ENCODE measurements at regions of chr1 and their contacts with region 1.

Region 1: DNA sequence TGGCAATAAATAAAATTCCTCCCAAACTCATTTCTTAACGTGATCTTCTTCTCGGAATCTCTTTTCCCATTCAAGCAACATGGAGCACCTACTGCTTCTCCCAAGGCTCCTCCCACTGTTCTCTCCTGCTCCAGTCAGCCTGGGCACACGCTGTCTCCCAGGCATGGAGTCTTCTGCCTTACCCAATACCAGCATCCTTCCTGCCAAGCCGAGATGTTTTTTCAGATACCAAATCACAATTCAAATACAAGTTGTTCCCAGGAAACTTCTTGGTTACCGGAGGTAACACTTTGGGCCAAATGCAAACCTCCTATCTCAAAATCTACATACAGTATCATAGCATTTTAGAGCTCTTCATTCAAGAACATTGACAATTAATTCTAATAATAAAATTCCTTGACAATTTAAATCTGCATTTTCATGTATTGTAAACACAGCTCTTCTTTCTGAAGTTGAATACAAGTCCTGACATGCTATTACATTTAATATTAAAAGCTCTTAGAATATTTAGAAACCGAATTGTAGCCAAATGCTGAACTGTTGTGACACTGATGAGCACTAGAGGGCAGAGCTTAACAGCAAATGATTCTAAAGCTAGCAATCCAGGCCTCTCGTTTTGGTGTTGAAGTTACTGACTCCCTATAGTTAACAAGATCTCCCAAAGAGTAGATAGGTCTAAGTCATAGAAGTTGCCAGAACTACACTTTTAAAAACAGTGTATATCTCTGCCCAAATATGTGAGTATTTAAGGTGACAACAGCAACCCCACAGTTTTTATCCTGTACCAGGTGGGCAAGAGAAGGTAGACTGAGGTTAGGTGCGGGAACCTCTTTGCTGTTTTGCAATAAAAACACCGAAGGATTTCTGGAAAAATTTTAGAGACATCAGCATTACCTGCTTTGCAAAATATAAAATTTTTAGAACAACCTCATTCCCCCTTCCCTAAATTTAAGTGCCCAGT is 52.3 kb downstream of the BCAR3 start:
- DNase-seq: peak; percentile 82
- H3K4me3 ChIP-seq: no peak overlapping the region
- H3K27ac ChIP-seq: peak overlapping the region; percentile 19
- H3K4me1 ChIP-seq: peaks cover 47% of the 10 kb centered on the region
- H3K27me3 ChIP-seq: no peaks in the 10 kb centered on the region
- CTCF ChIP-seq: peak; percentile 58 to 64
- POLR2A ChIP-seq: no peak

Region 2: GRCh38 chr1:93078986-93079654 is 550.3 kb before region 1 on chr1 and contains the start of gene MTF2:
- CTCF ChIA-PET with region 1: interaction called, 3 read pairs
- POLR2A ChIA-PET with region 1: no interaction called
- dilution Hi-C with region 1: no loop called
- intact Hi-C with region 1: loop called (anchors 5 kb)
- DNase-seq: peak; percentile 97
- H3K4me3 ChIP-seq: peak within 1 kb of the TSS; percentile 81 to 90 (median 89)
- H3K27ac ChIP-seq: peak within 1 kb of the TSS; percentile 87
- H3K4me1 ChIP-seq: peaks cover 23% of the 10 kb centered on the region
- H3K27me3 ChIP-seq: no peaks in the 10 kb centered on the region
- CTCF ChIP-seq: no peak
- POLR2A ChIP-seq: peak; percentile 98
- total RNA-seq, gene MTF2: 40.5 and 42.6 TPM in 2 replicates

Region 3: DNA sequence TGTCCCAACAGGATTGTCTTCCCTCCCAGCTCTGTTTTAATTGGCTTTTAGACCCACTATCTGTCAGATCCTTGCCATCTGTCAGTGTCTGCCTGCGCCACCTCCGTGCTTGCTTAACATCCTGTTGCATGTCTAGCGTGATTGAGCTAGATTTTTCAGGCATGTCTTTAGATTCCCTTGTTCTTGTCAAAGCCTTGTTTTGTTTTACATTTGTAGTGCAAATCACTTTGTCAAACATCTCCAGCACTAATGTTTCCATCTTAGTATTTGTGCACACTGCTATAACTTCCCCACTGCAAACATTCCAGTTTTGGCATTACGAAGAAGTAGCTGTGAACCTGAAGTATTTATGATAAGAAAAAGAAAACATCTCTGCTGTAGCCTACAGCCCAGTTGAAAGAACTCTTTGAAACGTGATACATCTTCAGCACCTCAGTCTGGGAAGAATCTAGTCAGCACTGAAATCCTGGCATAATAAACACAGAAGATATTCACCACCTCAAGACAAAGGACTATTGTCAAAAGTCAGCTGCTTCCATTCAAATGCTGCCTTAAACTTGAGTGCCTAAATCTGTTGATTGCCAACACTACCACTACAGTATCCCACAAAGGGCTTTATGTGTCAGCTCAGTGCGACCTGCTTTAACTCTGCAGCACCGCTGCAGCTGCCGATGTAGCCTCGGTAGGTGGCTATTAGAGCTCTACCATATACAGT is 76.5 kb before region 1 on chr1:
- CTCF ChIA-PET with region 1: interaction called, 8 read pairs
- POLR2A ChIA-PET with region 1: interaction called, 4 read pairs
- dilution Hi-C with region 1: no loop called
- intact Hi-C with region 1: loop called (anchors 1 kb)
- DNase-seq: peak; percentile 70
- H3K4me3 ChIP-seq: no peak overlapping the region
- H3K27ac ChIP-seq: peak overlapping the region; percentile 34
- H3K4me1 ChIP-seq: peaks cover 58% of the 10 kb centered on the region
- H3K27me3 ChIP-seq: no peaks in the 10 kb centered on the region
- CTCF ChIP-seq: no peak
- POLR2A ChIP-seq: no peak

Region 4: GRCh38 chr1:93615582-93616150 is 13.7 kb before region 1 on chr1:
- CTCF ChIA-PET with region 1: interaction called, 23 read pairs
- POLR2A ChIA-PET with region 1: no interaction called
- dilution Hi-C with region 1: no loop called
- intact Hi-C with region 1: loop called (anchors 1 kb)
- DNase-seq: peak; percentile 28
- H3K4me3 ChIP-seq: no peak overlapping the region
- H3K27ac ChIP-seq: peak overlapping the region; percentile 21
- H3K4me1 ChIP-seq: peaks cover 34% of the 10 kb centered on the region
- H3K27me3 ChIP-seq: no peaks in the 10 kb centered on the region
- CTCF ChIP-seq: no peak
- POLR2A ChIP-seq: no peak

Region 5: DNA sequence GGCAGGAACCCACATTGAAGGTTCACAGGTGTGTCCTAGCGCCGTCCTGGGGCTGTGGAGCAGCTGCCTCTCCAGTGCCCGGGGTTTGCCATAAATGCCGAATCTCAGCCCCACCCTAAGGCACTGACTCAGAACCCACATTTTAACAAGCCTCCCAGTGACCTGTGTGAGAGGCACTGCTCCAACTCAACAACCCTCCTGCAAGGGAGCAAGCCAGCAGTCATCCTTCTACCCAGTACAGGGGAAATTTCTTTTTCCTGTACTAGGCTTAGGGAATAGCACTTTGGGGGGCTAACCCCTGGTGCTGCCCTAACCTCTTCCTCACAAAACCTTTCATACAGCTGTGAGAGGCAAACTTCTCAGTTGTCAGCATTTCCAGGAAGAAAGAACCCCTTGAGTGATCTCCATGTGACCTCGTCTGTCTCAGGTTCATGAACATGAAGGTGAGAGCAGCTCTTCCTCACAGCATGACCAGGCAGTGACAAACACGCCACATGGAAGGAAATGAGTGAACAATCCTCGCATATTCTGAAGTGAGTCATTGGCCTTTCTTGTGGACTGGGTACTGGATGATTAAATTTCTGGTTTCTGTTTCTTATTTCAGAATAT is 63.7 kb after region 1 on chr1:
- CTCF ChIA-PET with region 1: interaction called, 16 read pairs
- POLR2A ChIA-PET with region 1: no interaction called
- dilution Hi-C with region 1: no loop called
- intact Hi-C with region 1: no loop called
- DNase-seq: peak; percentile 77
- H3K4me3 ChIP-seq: no peak overlapping the region
- H3K27ac ChIP-seq: peak overlapping the region; percentile 85
- H3K4me1 ChIP-seq: peaks cover 27% of the 10 kb centered on the region
- H3K27me3 ChIP-seq: no peaks in the 10 kb centered on the region
- CTCF ChIP-seq: no peak
- POLR2A ChIP-seq: no peak

Region 6: GRCh38 chr1:93804412-93804811 is 175.0 kb after region 1 on chr1:
- CTCF ChIA-PET with region 1: interaction called, 28 read pairs
- POLR2A ChIA-PET with region 1: no interaction called
- dilution Hi-C with region 1: no loop called
- intact Hi-C with region 1: no loop called
- DNase-seq: peak; percentile 97
- H3K4me3 ChIP-seq: peak overlapping the region in 1 of 3 experiments; percentile 31
- H3K27ac ChIP-seq: peak overlapping the region; percentile 72
- H3K4me1 ChIP-seq: peaks cover 33% of the 10 kb centered on the region
- H3K27me3 ChIP-seq: no peaks in the 10 kb centered on the region
- CTCF ChIP-seq: no peak
- POLR2A ChIP-seq: peak; percentile 71

Region 7: GRCh38 chr1:94218332-94218731 is 589.0 kb after region 1 on chr1:
- CTCF ChIA-PET with region 1: no interaction called
- POLR2A ChIA-PET with region 1: no interaction called
- dilution Hi-C with region 1: no loop called
- intact Hi-C with region 1: no loop called
- DNase-seq: peak; percentile 81
- H3K4me3 ChIP-seq: peak overlapping the region in 1 of 3 experiments; percentile 8
- H3K27ac ChIP-seq: peak overlapping the region; percentile 48
- H3K4me1 ChIP-seq: peaks cover 62% of the 10 kb centered on the region
- H3K27me3 ChIP-seq: no peaks in the 10 kb centered on the region
- CTCF ChIP-seq: no peak
- POLR2A ChIP-seq: no peak